ENCODE measurements at regions of chr20 and their contacts with region 1.

Region 1: DNA sequence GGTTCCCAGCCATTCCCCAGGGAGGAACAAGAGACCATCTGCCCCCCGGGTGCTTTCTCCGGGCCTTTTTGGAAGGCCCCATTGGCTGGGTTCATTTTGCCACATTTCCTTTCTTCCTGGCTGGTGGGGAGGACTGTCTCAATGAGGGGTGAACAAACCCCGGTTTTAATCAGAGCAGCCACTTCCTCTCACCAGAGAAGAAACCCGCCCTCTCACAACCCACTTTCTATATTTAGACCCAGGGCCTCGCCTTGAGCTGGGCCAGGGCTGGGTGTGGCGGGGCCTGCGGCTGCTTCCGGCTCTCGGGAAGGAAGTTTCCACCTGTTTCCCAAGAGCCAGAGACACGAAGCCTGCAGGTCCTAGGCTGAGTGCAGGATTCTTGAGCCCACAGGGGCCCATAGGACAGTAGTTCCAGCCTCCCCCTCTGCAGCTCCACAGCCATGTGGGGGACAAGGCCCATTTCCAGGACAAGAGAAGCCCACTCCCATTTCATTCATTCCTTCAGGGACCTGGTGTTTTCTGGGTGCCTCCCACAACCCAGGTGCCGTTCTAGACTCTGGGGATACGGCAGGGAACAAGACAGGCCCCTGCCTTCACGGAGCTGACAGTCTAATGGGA is 41.8 kb downstream of the RBM38 start:
- DNase-seq: peak; percentile 73 to 92 (median 89)
- H3K4me3 ChIP-seq: peak overlapping the region in 1 of 7 experiments; percentile 10
- H3K27ac ChIP-seq: peak overlapping the region in 1 of 2 experiments; percentile 26
- H3K4me1 ChIP-seq: peaks cover 13 to 43% (median 39%) of the 10 kb centered on the region in 4 experiments
- H3K27me3 ChIP-seq: no peaks in the 10 kb centered on the region

Region 2: DNA sequence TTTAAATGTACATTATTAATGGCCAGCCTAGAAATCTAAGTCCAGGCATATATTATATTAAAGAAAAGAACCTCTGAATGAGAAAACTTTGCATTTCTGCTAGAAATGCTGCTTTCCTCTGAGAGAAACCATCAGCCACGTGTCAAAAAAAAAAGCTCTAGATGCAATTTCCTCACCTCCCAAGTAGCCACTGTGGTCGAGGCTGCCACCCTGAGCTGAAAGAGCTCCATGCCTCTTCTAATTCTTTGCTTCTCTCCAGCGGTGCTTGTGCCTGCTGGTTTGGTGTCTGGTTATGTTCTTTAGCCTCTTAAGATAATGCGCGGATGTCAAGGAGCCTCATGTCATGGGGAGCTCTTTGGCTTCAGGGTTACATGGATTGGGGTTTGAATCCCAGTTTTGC is 487.9 kb before region 1 on chr20:
- CTCF ChIA-PET with region 1: no interaction called
- POLR2A ChIA-PET with region 1: no interaction called
- DNase-seq: no peak
- H3K4me3 ChIP-seq: no peak overlapping the region
- H3K27ac ChIP-seq: no peak overlapping the region
- H3K4me1 ChIP-seq: no peaks in the 10 kb centered on the region
- H3K27me3 ChIP-seq: peaks cover 0 to 54% (median 6%) of the 10 kb centered on the region in 5 experiments

Region 3: GRCh38 chr20:57374931-57375651 is 57.9 kb before region 1 on chr20:
- CTCF ChIA-PET with region 1: interaction called, 10 read pairs
- POLR2A ChIA-PET with region 1: no interaction called
- DNase-seq: no peak
- H3K4me3 ChIP-seq: peak overlapping the region in 1 of 7 experiments; percentile 3
- H3K27ac ChIP-seq: peak overlapping the region in 1 of 2 experiments; percentile 8
- H3K4me1 ChIP-seq: peaks cover 0 to 11% (median 0%) of the 10 kb centered on the region in 4 experiments
- H3K27me3 ChIP-seq: no peaks in the 10 kb centered on the region

Region 4: GRCh38 chr20:57417830-57418780 is 14.9 kb before region 1 on chr20:
- CTCF ChIA-PET with region 1: interaction called, 11 read pairs
- POLR2A ChIA-PET with region 1: no interaction called
- DNase-seq: peak in 1 of 3 donors; percentile 22
- H3K4me3 ChIP-seq: no peak overlapping the region
- H3K27ac ChIP-seq: no peak overlapping the region
- H3K4me1 ChIP-seq: peaks cover 0 to 7% (median 3%) of the 10 kb centered on the region in 4 experiments
- H3K27me3 ChIP-seq: no peaks in the 10 kb centered on the region

Region 5: GRCh38 chr20:57445298-57445697 is 12.3 kb after region 1 on chr20:
- CTCF ChIA-PET with region 1: interaction called, 33 read pairs
- POLR2A ChIA-PET with region 1: interaction called, 3 read pairs
- DNase-seq: no peak
- H3K4me3 ChIP-seq: no peak overlapping the region
- H3K27ac ChIP-seq: no peak overlapping the region
- H3K4me1 ChIP-seq: peaks cover 12 to 18% (median 16%) of the 10 kb centered on the region in 4 experiments
- H3K27me3 ChIP-seq: no peaks in the 10 kb centered on the region

Region 6: DNA sequence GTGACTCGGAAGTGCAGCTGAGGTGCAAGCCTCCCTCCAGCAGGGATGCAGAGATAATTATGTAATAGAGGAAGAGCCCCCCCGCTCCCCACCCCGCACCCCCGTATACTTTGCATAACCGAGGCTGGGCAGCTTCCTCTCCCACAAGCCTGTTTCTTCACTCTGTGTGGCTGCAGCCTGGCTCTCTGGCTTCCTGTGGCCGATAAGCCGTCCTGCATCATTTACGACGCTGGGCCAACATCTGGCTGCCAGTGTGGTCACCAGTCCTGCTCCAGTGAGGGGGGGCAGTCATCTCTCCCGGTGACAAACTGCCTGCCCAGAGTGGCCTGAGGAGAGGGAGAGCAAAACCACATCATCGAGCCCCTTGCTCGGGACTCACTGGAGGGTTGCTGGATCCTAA is 17.4 kb after region 1 on chr20:
- CTCF ChIA-PET with region 1: interaction called, 33 read pairs
- POLR2A ChIA-PET with region 1: interaction called, 3 read pairs
- DNase-seq: peak; percentile 68 to 94 (median 91)
- H3K4me3 ChIP-seq: peak overlapping the region in 3 of 7 experiments; percentile 16 to 58 (median 46)
- H3K27ac ChIP-seq: peak overlapping the region in 1 of 2 experiments; percentile 36
- H3K4me1 ChIP-seq: peaks cover 16 to 44% (median 40%) of the 10 kb centered on the region in 4 experiments
- H3K27me3 ChIP-seq: no peaks in the 10 kb centered on the region

Region 7: GRCh38 chr20:57540890-57541580 is 108.1 kb after region 1 on chr20:
- CTCF ChIA-PET with region 1: no interaction called
- POLR2A ChIA-PET with region 1: no interaction called
- DNase-seq: no peak
- H3K4me3 ChIP-seq: no peak overlapping the region
- H3K27ac ChIP-seq: no peak overlapping the region
- H3K4me1 ChIP-seq: no peaks in the 10 kb centered on the region
- H3K27me3 ChIP-seq: peaks cover 0 to 25% (median 19%) of the 10 kb centered on the region in 5 experiments